CD4-positive, alpha-beta T cell (primary cell): ENCODE measurements at regions of chr2 and their contacts with region 1.

Region 1: GRCh38 chr2:182650704-182651103 is 65.4 kb upstream of the DNAJC10 start:
- DNase-seq: peak in 3 of 14 experiments; percentile 5 to 15 (median 14)
- ATAC-seq: no peak
- H3K4me3 ChIP-seq: no peak overlapping the region
- H3K4me3 Mint-ChIP-seq: no peak overlapping the region
- H3K27ac ChIP-seq: no peak overlapping the region
- H3K27ac Mint-ChIP-seq: no peak overlapping the region
- H3K4me1 ChIP-seq: no peaks in the 10 kb centered on the region
- H3K4me1 Mint-ChIP-seq: peaks cover 9% of the 10 kb centered on the region
- H3K27me3 ChIP-seq: peaks cover 0 to 4% of the 10 kb centered on the region in 2 experiments
- H3K27me3 Mint-ChIP-seq: peaks cover 4% of the 10 kb centered on the region
- CTCF ChIP-seq: peak; percentile 36

Region 2: GRCh38 chr2:182186132-182186735 is 464.5 kb before region 1 on chr2:
- CTCF ChIA-PET with region 1: no interaction called
- POLR2A ChIA-PET with region 1: no interaction called
- intact Hi-C with region 1: loop called (anchors 5 kb)
- DNase-seq: peak in 3 of 14 experiments; percentile 34 to 41 (median 34)
- ATAC-seq: no peak
- H3K4me3 ChIP-seq: no peak overlapping the region
- H3K4me3 Mint-ChIP-seq: no peak overlapping the region
- H3K27ac ChIP-seq: no peak overlapping the region
- H3K27ac Mint-ChIP-seq: no peak overlapping the region
- H3K4me1 ChIP-seq: no peaks in the 10 kb centered on the region
- H3K4me1 Mint-ChIP-seq: no peaks in the 10 kb centered on the region
- H3K27me3 ChIP-seq: peaks cover 0 to 3% of the 10 kb centered on the region in 2 experiments
- H3K27me3 Mint-ChIP-seq: peaks cover 15% of the 10 kb centered on the region
- CTCF ChIP-seq: peak; percentile 91

Region 3: GRCh38 chr2:182622231-182622630 is 28.5 kb before region 1 on chr2:
- CTCF ChIA-PET with region 1: no interaction called
- POLR2A ChIA-PET with region 1: no interaction called
- intact Hi-C with region 1: no loop called
- DNase-seq: no peak
- ATAC-seq: no peak
- H3K4me3 ChIP-seq: no peak overlapping the region
- H3K4me3 Mint-ChIP-seq: no peak overlapping the region
- H3K27ac ChIP-seq: no peak overlapping the region
- H3K27ac Mint-ChIP-seq: no peak overlapping the region
- H3K4me1 ChIP-seq: no peaks in the 10 kb centered on the region
- H3K4me1 Mint-ChIP-seq: no peaks in the 10 kb centered on the region
- H3K27me3 ChIP-seq: peaks cover 0 to 3% of the 10 kb centered on the region in 2 experiments
- H3K27me3 Mint-ChIP-seq: peaks cover 3% of the 10 kb centered on the region
- CTCF ChIP-seq: no peak